K562 (cell line): ENCODE measurements at regions of chr16 and their contacts with region 1.

Region 1: GRCh38 chr16:53022374-53022773 is 30.3 kb downstream of the CHD9NB start:
- DNase-seq: peak; percentile 61 to 68 (median 64)
- ATAC-seq: peak; percentile 94
- H3K4me3 ChIP-seq: no peak overlapping the region
- H3K27ac ChIP-seq: no peak overlapping the region
- H3K4me1 ChIP-seq: no peaks in the 10 kb centered on the region; a peak in 3 of 5 replicates
- H3K27me3 ChIP-seq: 0 out of 5 replicates have a peak, but pooled peaks cover 0 to 2% of the 10 kb centered on the region in 2 experiments
- CTCF ChIP-seq: peak; percentile 61 to 81 (median 65)
- EP300 ChIP-seq: no peak
- POLR2A ChIP-seq: no peak
- RAD21 ChIP-seq: peak; percentile 67 to 82

Region 2: DNA sequence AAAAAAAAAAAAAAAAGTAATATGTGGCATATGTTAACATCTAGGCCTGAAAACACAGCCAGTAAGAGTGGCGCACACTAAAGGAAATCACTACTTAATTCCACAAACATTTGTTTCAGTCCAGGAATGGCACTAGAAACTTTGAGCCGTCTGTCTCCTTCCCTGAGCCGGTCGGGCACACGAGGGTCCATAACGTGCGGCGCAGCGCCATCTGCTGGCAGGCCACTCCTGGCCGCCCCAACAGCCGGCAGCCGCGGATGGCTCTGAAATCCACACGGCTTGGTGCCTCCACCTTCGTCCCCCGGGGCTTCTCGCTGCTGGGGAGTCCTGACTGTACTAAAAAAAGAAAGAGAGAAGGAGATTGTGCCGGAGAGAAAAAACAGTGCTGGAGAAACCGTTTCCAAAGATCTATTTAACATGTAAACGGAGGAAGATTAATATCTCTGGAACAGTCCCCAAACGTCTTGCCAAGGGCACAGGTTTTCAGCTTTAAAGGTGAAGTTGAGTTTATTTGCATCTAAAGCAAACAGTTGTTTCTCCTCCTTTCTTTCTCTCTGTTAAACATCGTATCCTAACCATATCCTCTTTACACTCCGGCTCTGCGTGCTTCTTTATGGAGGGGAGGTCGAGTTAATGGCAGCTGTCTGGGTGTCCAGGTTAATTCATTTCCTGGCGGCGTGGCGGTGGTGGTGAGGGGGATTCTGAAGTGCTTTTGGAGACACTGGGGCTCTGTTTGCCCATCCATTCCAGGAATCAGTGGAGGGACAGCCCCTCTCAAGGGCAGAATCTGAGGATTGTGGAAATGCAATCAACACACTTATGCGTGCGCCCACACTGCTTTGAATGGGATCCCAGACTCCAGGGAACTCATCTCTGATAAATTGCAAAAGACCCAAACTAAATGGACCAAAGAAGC is 1260.0 kb before region 1 on chr16:
- CTCF ChIA-PET with region 1: no interaction called
- POLR2A ChIA-PET with region 1: no interaction called
- in situ Hi-C with region 1: no loop called
- intact Hi-C with region 1: loop called (anchors 10 kb)
- DNase-seq: peak; percentile 65 to 73 (median 66)
- ATAC-seq: peak; percentile 99
- H3K4me3 ChIP-seq: no peak overlapping the region
- H3K27ac ChIP-seq: no peak overlapping the region
- H3K4me1 ChIP-seq: no peaks in the 10 kb centered on the region
- H3K27me3 ChIP-seq: no peaks in the 10 kb centered on the region
- CTCF ChIP-seq: peak; percentile 72 to 81 (median 73)
- EP300 ChIP-seq: no peak
- POLR2A ChIP-seq: no peak
- RAD21 ChIP-seq: peak; percentile 53 to 74

Region 3: GRCh38 chr16:52095471-52095870 is 926.9 kb before region 1 on chr16:
- CTCF ChIA-PET with region 1: no interaction called
- POLR2A ChIA-PET with region 1: no interaction called
- in situ Hi-C with region 1: no loop called
- intact Hi-C with region 1: loop called (anchors 5 kb)
- DNase-seq: no peak
- ATAC-seq: no peak
- H3K4me3 ChIP-seq: no peak overlapping the region
- H3K27ac ChIP-seq: no peak overlapping the region
- H3K4me1 ChIP-seq: no peaks in the 10 kb centered on the region
- H3K27me3 ChIP-seq: no peaks in the 10 kb centered on the region
- CTCF ChIP-seq: no peak
- EP300 ChIP-seq: no peak
- POLR2A ChIP-seq: no peak
- RAD21 ChIP-seq: no peak

Region 4: DNA sequence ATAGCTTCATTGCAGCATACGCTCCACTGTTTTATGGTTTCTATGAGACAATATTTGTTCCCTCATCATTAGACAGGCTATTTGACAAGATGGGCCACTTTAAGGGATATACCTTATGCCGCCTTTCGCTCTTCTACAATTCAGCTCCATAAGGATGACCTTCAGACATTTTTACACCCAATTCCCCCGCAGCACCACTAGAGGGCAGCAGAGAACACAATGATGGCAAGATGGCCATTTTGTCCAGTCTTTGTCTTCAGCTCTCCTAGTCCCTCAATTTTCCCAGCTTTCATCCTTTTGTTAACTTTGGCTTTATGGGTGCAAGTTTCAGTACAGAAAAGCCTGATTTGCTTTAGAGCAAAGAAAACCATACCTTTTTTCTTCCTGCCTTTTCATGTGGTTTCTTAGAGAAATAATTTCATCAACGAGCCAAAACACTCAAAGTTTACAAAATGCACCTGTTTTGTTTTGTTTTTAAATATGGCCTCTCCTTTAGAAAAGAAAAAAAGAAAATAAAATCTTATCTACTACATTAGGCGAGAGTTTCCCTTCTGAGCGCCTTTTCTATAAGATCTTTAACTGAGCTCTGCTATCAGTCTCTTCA is 830.7 kb before region 1 on chr16:
- CTCF ChIA-PET with region 1: interaction called, 9 read pairs
- POLR2A ChIA-PET with region 1: no interaction called
- in situ Hi-C with region 1: loop called (anchors 10 kb)
- intact Hi-C with region 1: loop called (anchors 1 kb)
- DNase-seq: peak; percentile 59 to 74 (median 69)
- ATAC-seq: peak; percentile 54; the same call in 2 of the 3 replicates
- H3K4me3 ChIP-seq: no peak overlapping the region
- H3K27ac ChIP-seq: no peak overlapping the region
- H3K4me1 ChIP-seq: no peaks in the 10 kb centered on the region
- H3K27me3 ChIP-seq: no peaks in the 10 kb centered on the region
- CTCF ChIP-seq: peak; percentile 60 to 79 (median 76)
- EP300 ChIP-seq: no peak
- POLR2A ChIP-seq: no peak
- RAD21 ChIP-seq: peak; percentile 65 to 75

Region 5: GRCh38 chr16:52976539-52977167 is 45.7 kb before region 1 on chr16:
- CTCF ChIA-PET with region 1: no interaction called
- POLR2A ChIA-PET with region 1: no interaction called
- in situ Hi-C with region 1: no loop called
- intact Hi-C with region 1: loop called (anchors 2 kb)
- DNase-seq: peak in 2 of 4 experiments; percentile 30 to 32
- ATAC-seq: peak; percentile 86
- H3K4me3 ChIP-seq: no peak overlapping the region
- H3K27ac ChIP-seq: no peak overlapping the region
- H3K4me1 ChIP-seq: no peaks in the 10 kb centered on the region
- H3K27me3 ChIP-seq: no peaks in the 10 kb centered on the region
- CTCF ChIP-seq: peak; percentile 29 to 52 (median 43); a peak in 4 of 6 replicates
- EP300 ChIP-seq: no peak
- POLR2A ChIP-seq: no peak
- RAD21 ChIP-seq: peak; percentile 30 to 63; a peak in 3 of 4 replicates

Region 6: DNA sequence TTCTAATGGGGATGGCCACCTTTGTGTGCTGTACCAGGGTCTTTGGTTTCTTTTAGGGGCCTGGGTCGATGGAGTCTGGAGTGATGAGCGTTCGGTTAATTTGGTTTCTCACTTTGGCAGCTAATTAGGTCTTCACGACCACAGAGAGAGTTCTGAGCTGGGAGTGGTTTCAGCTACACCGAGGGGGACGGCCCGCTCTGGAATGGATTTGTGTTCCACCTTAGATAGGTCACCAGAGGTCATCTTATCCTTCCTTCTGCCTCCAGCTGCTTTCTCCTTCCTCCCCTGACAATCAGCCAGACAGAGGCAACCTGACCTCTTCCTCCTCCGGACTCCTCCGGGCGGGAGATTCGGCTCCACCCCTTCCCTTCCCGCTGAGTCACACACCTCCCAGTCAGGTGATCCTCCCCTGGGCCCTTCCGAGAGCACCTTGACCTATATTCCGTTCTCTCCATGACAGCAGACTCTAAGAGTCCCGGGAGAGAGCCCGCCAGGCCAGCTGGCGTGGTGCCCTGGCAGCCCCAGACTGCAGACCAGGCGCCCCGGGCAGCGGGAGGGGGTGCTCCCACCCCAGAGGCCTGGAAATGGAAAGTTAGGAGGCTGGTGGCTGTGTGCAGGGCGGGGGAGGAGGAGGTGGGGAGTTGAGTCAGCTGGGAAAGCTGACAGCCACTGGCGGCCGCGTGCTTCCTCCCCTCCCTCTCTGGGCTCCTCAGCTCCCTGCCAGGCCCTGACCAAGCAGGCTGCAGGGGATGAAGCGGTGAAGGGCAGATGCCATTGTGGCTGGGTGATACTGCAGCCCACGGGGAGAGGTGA is 77.2 kb after region 1 on chr16:
- CTCF ChIA-PET with region 1: no interaction called
- POLR2A ChIA-PET with region 1: no interaction called
- in situ Hi-C with region 1: no loop called
- intact Hi-C with region 1: no loop called
- DNase-seq: peak; percentile 89 to 96 (median 92)
- ATAC-seq: peak; percentile 95
- H3K4me3 ChIP-seq: peak overlapping the region; percentile 47
- H3K27ac ChIP-seq: peak overlapping the region; percentile 82
- H3K4me1 ChIP-seq: peaks cover 16 to 28% of the 10 kb centered on the region in 2 experiments
- H3K27me3 ChIP-seq: no peaks in the 10 kb centered on the region
- CTCF ChIP-seq: no peak
- EP300 ChIP-seq: peak; percentile 52
- POLR2A ChIP-seq: peak; percentile 57
- RAD21 ChIP-seq: no peak